Mammary epithelial cell (primary cell): ENCODE measurements at regions of chr1 and their contacts with region 1.

Region 1: DNA sequence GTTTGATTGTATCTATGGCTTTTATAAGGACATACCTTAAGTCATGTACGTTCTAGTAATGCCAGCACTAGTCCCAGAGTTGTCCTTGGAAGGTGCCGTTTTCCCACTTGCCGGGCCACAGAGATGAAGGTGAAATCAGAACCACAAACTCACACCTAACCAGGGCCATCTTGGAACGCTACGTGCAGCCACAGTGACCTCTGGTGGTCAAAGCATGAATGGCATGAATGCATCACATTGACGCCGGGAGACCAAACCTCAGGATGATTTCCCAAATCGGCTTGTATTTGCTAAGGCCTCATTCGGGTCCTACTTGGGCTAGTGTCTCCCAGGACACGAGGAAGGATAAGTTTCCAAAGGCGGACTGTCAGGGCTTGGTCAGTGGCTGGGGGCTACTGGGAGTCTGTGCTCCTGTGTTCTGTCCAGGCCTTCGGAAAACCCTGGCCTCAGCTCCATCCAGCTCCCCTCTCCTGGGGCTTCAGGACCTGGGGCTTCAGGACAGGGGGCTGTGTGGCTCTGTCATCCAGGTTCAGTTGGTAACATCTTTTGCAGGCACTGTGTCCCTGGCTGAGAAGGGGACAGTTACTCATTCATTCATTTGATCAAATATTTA is 260.5 kb downstream of the PRDM2 start:
- DNase-seq: peak; percentile 41
- H3K4me3 ChIP-seq: no peak overlapping the region
- H3K27ac ChIP-seq: no peak overlapping the region
- H3K4me1 ChIP-seq: no peaks in the 10 kb centered on the region
- H3K27me3 ChIP-seq: no peaks in the 10 kb centered on the region
- CTCF ChIP-seq: peak; percentile 95 to 99

Region 2: DNA sequence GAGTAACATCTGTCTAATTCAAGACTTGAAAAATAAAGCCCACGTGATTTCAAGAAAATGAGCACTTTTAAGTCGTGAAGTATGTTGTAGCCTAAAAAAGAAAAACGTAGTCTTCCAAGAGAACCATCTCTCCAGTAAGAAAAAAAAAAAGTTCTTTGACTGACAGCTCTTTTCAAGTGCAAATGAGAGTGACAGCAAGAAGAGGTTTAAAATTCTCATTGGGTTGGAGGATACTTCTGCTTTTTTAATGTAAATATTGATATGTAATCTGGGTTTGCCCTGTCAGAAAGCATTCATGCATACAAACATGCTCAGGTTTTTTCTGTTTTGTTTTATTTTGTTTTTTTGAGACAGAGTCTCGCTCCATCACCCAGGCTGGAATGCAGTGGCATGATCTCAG is 292.8 kb before region 1 on chr1:
- CTCF ChIA-PET with region 1: no interaction called
- dilution Hi-C with region 1: no loop called
- in situ Hi-C with region 1: loop called (anchors 5 to 10 kb)
- intact Hi-C with region 1: loop called (anchors 1 kb)
- DNase-seq: no peak
- H3K4me3 ChIP-seq: no peak overlapping the region
- H3K27ac ChIP-seq: no peak overlapping the region
- H3K4me1 ChIP-seq: peaks cover 3% of the 10 kb centered on the region
- H3K27me3 ChIP-seq: no peaks in the 10 kb centered on the region
- CTCF ChIP-seq: no peak

Region 3: GRCh38 chr1:13725714-13726175 is 234.7 kb before region 1 on chr1:
- CTCF ChIA-PET with region 1: no interaction called
- dilution Hi-C with region 1: no loop called
- in situ Hi-C with region 1: no loop called
- intact Hi-C with region 1: loop called (anchors 5 kb)
- DNase-seq: peak; percentile 34
- H3K4me3 ChIP-seq: no peak overlapping the region
- H3K27ac ChIP-seq: no peak overlapping the region
- H3K4me1 ChIP-seq: no peaks in the 10 kb centered on the region
- H3K27me3 ChIP-seq: no peaks in the 10 kb centered on the region
- CTCF ChIP-seq: peak; percentile 58 to 75